ENCODE measurements at regions of chr7 and their contacts with region 1.

Region 1: DNA sequence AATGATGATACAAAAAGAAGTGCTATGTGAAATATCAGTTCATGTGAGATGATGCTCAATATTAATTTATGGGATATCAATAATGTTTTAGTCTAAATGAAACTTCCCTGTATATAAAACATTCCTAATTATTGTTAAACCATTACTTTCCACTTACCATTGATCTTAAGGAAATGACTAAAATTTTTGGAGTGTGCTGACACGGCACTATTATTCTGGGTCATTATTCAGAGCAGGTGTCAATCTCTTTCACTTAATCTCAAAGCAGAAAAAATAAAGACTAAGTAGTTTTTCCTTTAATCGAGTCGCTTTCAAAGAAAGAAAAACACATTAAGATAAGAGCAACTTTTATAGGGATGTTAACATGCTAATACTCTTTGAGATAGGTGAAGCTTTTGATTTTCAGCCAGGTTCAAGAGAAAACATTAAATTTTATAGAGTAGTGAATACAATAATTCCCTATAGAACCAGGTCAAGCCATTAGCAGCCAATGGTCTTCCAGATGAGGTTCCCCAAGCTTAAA is 11.4 kb upstream of the CREB5 start:
- DNase-seq: no peak
- ATAC-seq: no peak
- H3K4me3 ChIP-seq: no peak overlapping the region
- H3K27ac ChIP-seq: no peak overlapping the region
- H3K4me1 ChIP-seq: no peaks in the 10 kb centered on the region
- H3K27me3 ChIP-seq: 0 out of 2 replicates have a peak, but pooled peaks cover 7% of the 10 kb centered on the region
- CTCF ChIP-seq: no peak

Region 2: DNA sequence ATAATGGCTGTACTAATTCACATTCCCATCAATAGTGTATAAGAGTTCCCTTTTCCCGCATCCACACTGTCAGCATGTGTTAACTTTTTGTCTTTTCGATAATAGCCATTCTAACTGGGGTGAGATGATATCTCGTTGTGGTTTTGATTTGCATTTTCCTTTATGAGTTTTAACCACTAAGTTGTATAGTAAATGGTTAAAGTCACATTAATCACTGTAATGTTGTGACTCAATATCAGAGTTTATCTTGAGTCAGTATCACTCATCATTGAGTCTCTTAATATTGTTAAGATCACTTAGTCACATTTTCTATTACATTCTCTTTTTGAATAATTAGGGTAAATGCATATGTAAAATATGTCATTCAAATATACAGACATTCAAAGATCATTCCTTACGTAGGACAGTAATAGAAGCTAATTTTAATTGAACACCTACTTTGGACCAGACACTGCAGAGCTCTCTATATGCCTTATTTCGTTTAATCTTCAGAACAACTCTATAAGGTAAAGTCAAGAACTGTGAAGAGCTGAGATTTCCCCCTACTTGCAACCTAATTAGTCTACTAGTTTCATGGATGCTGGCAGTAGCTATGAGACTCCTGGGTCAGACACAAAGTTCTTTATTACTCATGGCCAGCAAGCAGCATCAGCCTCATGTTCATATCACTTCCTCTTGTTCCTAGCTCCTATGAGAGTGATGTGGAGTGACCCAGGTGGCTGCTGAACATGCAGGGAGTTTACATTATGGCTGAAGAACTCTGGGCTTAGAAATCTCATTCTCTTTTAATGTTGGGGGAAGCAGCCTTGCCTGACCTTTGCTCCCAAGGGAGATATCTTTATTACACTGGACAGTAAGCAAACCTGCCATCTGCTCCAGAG is 41.9 kb after region 1 on chr7:
- CTCF ChIA-PET with region 1: no interaction called
- POLR2A ChIA-PET with region 1: no interaction called
- in situ Hi-C with region 1: no loop called
- intact Hi-C with region 1: no loop called
- DNase-seq: no peak
- ATAC-seq: no peak
- H3K4me3 ChIP-seq: no peak overlapping the region
- H3K27ac ChIP-seq: no peak overlapping the region
- H3K4me1 ChIP-seq: no peaks in the 10 kb centered on the region
- H3K27me3 ChIP-seq: peaks cover 40% of the 10 kb centered on the region
- CTCF ChIP-seq: no peak

Region 3: GRCh38 chr7:29319719-29320521 is 919.0 kb after region 1 on chr7:
- CTCF ChIA-PET with region 1: no interaction called
- POLR2A ChIA-PET with region 1: interaction called, 16 read pairs
- in situ Hi-C with region 1: no loop called
- intact Hi-C with region 1: no loop called
- DNase-seq: no peak
- ATAC-seq: no peak
- H3K4me3 ChIP-seq: no peak overlapping the region
- H3K27ac ChIP-seq: no peak overlapping the region
- H3K4me1 ChIP-seq: no peaks in the 10 kb centered on the region
- H3K27me3 ChIP-seq: peaks cover 23% of the 10 kb centered on the region
- CTCF ChIP-seq: no peak